ENCODE measurements at regions of chr15 and their contacts with region 1.

Region 1: DNA sequence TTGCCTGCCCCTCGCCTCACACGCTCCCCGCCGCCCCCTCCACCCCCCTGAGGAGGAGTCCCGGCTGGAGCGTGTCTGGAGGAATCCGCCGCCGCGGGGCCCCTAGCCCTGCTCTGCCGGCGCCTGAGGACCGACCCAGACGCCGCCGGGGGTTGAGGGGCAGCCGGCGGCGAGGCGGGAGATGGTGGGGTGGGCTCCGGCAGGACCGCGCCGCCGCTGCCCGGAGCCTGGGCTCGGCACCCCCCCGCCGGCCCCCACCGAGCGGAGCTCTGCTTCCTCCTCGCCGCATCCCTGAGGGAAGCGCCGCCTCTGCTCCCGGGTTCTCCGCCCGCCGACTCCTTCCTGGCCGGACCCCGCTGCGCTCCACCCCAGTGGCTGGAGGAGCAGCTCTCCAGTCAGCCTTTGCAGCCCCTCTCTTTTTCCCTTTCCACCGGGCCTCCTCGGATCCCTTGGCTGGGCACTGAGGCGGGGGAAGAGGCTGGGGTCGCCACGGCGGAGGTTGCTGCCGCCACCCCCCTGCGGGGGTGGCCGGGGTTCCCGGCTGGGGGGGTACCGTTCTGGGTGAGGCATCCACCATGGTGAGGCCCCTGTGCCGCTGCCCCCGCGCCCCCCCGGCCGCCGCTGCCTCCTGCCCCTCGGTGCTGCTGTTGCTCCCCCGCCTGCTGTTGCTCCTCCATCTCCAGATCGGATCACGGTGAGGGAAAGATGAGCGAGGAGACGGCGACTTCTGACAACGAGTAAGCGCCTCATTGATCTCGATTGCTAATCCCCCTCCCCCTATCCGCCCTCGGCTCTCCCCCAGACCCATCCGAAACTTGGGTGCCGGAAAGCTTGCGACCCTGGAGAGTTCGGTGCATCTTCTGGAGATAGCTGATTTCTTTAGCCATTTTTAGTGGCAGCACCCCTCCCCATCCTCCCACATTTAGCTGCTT is at the start of gene SPRED1:
- DNase-seq: peak; percentile 85 to 93 (median 92)
- ATAC-seq: peak; percentile 84
- H3K4me3 ChIP-seq: peak within 1 kb of the TSS; percentile 86
- H3K27ac ChIP-seq: peak within 1 kb of the TSS; percentile 97
- H3K4me1 ChIP-seq: no peaks in the 10 kb centered on the region
- H3K27me3 ChIP-seq: no peaks in the 10 kb centered on the region
- total RNA-seq, gene SPRED1: 9.4 to 14.5 (median 11.7) TPM

Region 2: GRCh38 chr15:37801529-37801928 is 451.2 kb before region 1 on chr15:
- intact Hi-C with region 1: no loop called
- DNase-seq: no peak
- ATAC-seq: no peak
- H3K4me3 ChIP-seq: no peak overlapping the region
- H3K27ac ChIP-seq: no peak overlapping the region
- H3K4me1 ChIP-seq: no peaks in the 10 kb centered on the region
- H3K27me3 ChIP-seq: no peaks in the 10 kb centered on the region

Region 3: GRCh38 chr15:37995461-37996347 is 257.0 kb before region 1 on chr15:
- intact Hi-C with region 1: loop called in 2 of 4 experiments (anchors 10 kb)
- DNase-seq: peak in 1 of 3 donors; percentile 35
- ATAC-seq: peak; percentile 81 to 85
- H3K4me3 ChIP-seq: no peak overlapping the region
- H3K27ac ChIP-seq: no peak overlapping the region
- H3K4me1 ChIP-seq: peaks cover 1% of the 10 kb centered on the region
- H3K27me3 ChIP-seq: no peaks in the 10 kb centered on the region

Region 4: GRCh38 chr15:38002883-38003477 is 249.8 kb before region 1 on chr15:
- intact Hi-C with region 1: loop called in 2 of 4 experiments (anchors 10 kb)
- DNase-seq: peak; percentile 41 to 82 (median 76)
- ATAC-seq: peak; percentile 78 to 81
- H3K4me3 ChIP-seq: no peak overlapping the region
- H3K27ac ChIP-seq: no peak overlapping the region
- H3K4me1 ChIP-seq: no peaks in the 10 kb centered on the region
- H3K27me3 ChIP-seq: no peaks in the 10 kb centered on the region

Region 5: DNA sequence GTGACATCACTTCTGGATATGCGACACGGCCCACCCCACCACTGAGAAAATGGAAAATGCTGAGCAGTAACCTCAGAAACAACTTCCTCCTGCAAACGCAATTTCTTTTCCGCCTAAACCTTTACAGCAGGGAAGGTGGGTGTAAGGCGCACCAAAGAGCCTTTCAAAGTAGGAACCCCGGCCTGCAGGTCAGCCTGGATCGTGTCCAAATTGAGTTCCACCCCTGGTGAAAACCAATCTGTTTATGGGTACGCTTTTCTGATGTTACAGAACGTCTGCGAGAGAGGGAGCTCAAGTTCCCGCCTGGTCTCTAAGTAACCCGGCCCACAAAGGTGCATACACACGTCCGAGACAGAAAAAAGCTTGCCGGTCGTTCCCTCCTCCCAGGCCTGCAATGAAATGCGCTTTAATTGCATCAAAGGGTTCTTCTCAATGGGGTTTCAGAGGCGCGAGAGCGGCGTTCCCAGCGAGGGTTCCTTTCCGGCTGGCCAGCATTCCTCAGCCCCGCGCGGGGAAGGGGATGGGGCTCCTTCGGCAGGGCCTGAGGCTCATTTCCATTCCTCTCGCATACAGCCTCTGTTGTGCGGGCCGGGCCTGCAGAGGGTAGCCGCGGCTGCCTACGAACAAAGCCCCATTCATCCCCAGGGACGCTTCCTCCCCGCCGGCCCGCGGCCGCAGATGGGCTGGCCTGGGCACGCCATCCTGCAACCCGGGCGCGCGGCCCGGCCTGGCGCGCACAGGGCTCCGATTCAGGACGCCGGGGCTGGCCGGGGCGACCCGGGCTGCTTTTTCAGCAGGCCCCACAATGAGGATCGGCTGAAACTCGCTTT is 180.2 kb before region 1 on chr15:
- intact Hi-C with region 1: loop called in 2 of 4 experiments (anchors 5 kb)
- DNase-seq: peak; percentile 84 to 94 (median 94)
- ATAC-seq: peak; percentile 94 to 95
- H3K4me3 ChIP-seq: peak overlapping the region; percentile 58
- H3K27ac ChIP-seq: peak overlapping the region; percentile 92
- H3K4me1 ChIP-seq: peaks cover 2% of the 10 kb centered on the region
- H3K27me3 ChIP-seq: no peaks in the 10 kb centered on the region

Region 6: GRCh38 chr15:38349251-38349650 is 96.5 kb after region 1 on chr15:
- intact Hi-C with region 1: loop called in 2 of 4 experiments (anchors 5 to 10 kb)
- DNase-seq: no peak
- ATAC-seq: no peak
- H3K4me3 ChIP-seq: no peak overlapping the region
- H3K27ac ChIP-seq: no peak overlapping the region
- H3K4me1 ChIP-seq: no peaks in the 10 kb centered on the region
- H3K27me3 ChIP-seq: no peaks in the 10 kb centered on the region